Common myeloid progenitor, CD34-positive (primary cell): ENCODE measurements at regions of chr10 and their contacts with region 1.

Region 1: GRCh38 chr10:11782793-11783557 is 40.2 kb upstream of the PROSER2 start:
- DNase-seq: peak; percentile 71 to 84 (median 79)
- H3K4me3 ChIP-seq: no peak overlapping the region
- H3K27ac ChIP-seq: no peak overlapping the region
- H3K4me1 ChIP-seq: peaks cover 0 to 5% (median 0%) of the 10 kb centered on the region in 4 experiments
- H3K27me3 ChIP-seq: no peaks in the 10 kb centered on the region

Region 2: GRCh38 chr10:11750420-11750819 is 32.6 kb before region 1 on chr10:
- CTCF ChIA-PET with region 1: no interaction called
- POLR2A ChIA-PET with region 1: no interaction called
- DNase-seq: no peak
- H3K4me3 ChIP-seq: no peak overlapping the region
- H3K27ac ChIP-seq: no peak overlapping the region
- H3K4me1 ChIP-seq: peaks cover 0 to 7% (median 5%) of the 10 kb centered on the region in 4 experiments
- H3K27me3 ChIP-seq: no peaks in the 10 kb centered on the region

Region 3: GRCh38 chr10:11772575-11773288 is 10.2 kb before region 1 on chr10:
- CTCF ChIA-PET with region 1: interaction called, 18 read pairs
- POLR2A ChIA-PET with region 1: no interaction called
- DNase-seq: no peak
- H3K4me3 ChIP-seq: no peak overlapping the region
- H3K27ac ChIP-seq: no peak overlapping the region
- H3K4me1 ChIP-seq: no peaks in the 10 kb centered on the region
- H3K27me3 ChIP-seq: no peaks in the 10 kb centered on the region

Region 4: GRCh38 chr10:11793762-11794479 is 10.9 kb after region 1 on chr10:
- CTCF ChIA-PET with region 1: interaction called, 14 read pairs
- POLR2A ChIA-PET with region 1: interaction called, 3 read pairs
- DNase-seq: no peak
- H3K4me3 ChIP-seq: no peak overlapping the region
- H3K27ac ChIP-seq: no peak overlapping the region
- H3K4me1 ChIP-seq: peaks cover 0 to 23% (median 15%) of the 10 kb centered on the region in 4 experiments
- H3K27me3 ChIP-seq: no peaks in the 10 kb centered on the region

Region 5: GRCh38 chr10:11869698-11870460 is 86.9 kb after region 1 on chr10:
- CTCF ChIA-PET with region 1: no interaction called
- POLR2A ChIA-PET with region 1: no interaction called
- DNase-seq: no peak
- H3K4me3 ChIP-seq: peak overlapping the region in 1 of 7 experiments; percentile 19
- H3K27ac ChIP-seq: no peak overlapping the region
- H3K4me1 ChIP-seq: peaks cover 16 to 29% (median 27%) of the 10 kb centered on the region in 4 experiments
- H3K27me3 ChIP-seq: no peaks in the 10 kb centered on the region

Region 6: DNA sequence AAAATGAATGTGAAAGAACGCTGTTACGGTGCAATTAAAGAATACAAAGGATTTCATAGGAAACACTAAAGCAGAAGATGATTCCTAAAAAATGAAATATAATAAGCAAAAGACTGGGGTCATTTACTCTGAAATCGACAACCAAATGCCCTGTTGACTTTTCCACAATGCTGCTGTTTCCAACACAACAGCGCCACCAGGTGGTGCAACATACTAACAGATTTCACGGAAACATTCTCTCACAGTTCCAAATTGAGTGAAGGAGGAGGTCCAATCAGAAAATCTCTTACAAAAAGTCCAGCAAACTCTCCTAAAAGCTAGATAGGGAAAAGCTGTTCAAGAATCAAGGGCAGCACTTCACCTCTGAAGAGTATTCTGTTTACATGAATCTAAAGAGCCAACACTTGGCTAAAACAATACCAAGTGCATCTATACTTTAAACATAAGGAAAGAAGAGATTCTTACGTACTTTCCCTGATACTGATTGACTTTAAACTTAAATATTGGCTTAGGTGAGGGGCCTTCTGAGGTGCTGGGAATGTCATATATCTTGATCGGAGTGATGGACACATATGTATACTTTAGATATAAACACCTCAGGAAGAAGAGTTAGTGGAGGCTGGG is 203.7 kb after region 1 on chr10:
- CTCF ChIA-PET with region 1: interaction called, 37 read pairs
- POLR2A ChIA-PET with region 1: no interaction called
- DNase-seq: peak; percentile 86 to 91 (median 87)
- H3K4me3 ChIP-seq: no peak overlapping the region
- H3K27ac ChIP-seq: no peak overlapping the region
- H3K4me1 ChIP-seq: peaks cover 0 to 13% (median 2%) of the 10 kb centered on the region in 4 experiments
- H3K27me3 ChIP-seq: no peaks in the 10 kb centered on the region